WTC11 (cell line): ENCODE measurements at regions of chr11 and their contacts with region 1.

Region 1: DNA sequence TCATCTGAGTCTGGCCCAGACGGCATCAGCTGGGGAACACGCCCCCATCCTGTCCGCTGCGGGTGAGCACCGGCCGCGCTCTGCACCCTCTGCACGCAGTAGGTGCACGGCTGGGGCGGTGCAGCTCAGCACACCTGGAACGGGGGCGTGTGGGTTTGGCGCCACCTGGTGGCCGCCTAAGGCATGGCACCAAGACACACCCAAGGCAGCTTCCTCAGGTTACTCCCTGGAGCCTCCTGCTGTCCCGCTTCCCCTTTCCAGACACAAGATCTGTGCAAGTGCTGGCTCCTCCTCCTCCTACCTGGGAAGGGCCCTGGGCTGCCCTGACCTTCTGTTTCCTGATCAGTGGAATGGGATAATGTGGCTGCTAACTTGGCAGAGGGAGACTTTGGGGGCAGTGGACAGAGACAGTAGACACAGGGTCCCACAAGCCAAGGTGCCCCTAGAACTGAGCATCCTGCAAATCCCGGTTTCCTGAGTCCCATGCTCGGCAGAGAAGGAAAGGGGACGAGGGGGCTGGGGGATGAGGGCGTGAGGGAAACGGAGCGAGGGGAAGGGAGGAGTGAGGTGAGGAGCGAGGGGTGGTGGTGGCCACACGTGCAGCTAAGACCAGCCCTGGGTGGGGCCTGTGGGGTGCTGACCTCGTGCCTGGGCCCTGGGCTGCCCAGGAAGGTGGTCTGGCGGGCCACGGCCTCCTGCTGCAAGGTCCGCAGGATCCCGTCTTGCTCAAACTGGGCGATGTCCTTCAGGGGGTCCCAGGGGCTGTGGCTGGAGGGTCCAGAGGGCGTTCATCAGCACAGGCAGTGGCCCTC is 34.8 kb upstream of the CARS1 start:
- DNase-seq: peak; percentile 95
- ATAC-seq: peak; percentile 92
- H3K4me3 Mint-ChIP-seq: no peak overlapping the region
- H3K27ac Mint-ChIP-seq: peak overlapping the region; percentile 21; the same call in 1 of the 2 replicates
- H3K4me1 Mint-ChIP-seq: peaks cover 23% of the 10 kb centered on the region
- H3K27me3 Mint-ChIP-seq: peaks cover 7% of the 10 kb centered on the region
- CTCF ChIP-seq: peak; percentile 100

Region 2: DNA sequence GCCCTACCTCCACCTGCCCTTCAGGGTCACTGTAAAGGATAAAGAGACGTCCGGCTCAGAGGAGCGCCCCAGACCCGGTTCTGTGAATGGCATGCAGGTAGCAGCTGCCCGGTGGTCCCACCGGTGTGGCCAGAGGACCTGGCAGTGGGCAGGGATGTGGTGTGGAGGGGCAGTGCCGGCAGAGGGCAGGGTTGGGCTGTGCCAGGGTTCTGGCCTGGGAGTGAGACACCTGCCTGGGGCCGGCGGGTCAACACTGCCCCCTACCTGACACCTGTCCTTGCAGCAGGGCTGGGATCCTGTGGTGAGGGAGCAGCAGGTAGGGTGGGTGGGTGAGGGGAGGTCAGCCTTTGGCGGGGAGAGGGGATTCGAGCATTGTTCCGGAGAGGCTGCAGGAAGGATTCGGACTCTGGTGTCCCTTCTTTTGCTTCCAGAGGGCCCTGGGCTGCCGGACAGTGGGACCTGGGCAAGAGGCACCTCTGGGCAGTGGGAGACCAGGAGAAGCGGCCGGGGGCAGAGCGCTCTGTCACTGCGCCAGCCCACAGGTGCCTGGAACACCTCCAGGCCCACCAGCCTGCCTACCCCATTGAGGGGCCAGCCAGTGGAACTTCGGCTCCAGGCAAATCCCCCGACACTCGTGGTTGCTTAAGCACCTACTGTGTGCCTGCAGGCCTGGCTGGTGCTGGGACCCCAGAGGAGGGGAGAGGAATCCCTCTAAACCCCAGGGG is 161.1 kb before region 1 on chr11:
- CTCF ChIA-PET with region 1: interaction called, 11 read pairs
- POLR2A ChIA-PET with region 1: no interaction called
- DNase-seq: peak; percentile 95
- ATAC-seq: peak; percentile 86
- H3K4me3 Mint-ChIP-seq: peak overlapping the region; percentile 72
- H3K27ac Mint-ChIP-seq: no peak overlapping the region
- H3K4me1 Mint-ChIP-seq: peaks cover 7% of the 10 kb centered on the region
- H3K27me3 Mint-ChIP-seq: peaks cover 42% of the 10 kb centered on the region
- CTCF ChIP-seq: peak; percentile 76

Region 3: DNA sequence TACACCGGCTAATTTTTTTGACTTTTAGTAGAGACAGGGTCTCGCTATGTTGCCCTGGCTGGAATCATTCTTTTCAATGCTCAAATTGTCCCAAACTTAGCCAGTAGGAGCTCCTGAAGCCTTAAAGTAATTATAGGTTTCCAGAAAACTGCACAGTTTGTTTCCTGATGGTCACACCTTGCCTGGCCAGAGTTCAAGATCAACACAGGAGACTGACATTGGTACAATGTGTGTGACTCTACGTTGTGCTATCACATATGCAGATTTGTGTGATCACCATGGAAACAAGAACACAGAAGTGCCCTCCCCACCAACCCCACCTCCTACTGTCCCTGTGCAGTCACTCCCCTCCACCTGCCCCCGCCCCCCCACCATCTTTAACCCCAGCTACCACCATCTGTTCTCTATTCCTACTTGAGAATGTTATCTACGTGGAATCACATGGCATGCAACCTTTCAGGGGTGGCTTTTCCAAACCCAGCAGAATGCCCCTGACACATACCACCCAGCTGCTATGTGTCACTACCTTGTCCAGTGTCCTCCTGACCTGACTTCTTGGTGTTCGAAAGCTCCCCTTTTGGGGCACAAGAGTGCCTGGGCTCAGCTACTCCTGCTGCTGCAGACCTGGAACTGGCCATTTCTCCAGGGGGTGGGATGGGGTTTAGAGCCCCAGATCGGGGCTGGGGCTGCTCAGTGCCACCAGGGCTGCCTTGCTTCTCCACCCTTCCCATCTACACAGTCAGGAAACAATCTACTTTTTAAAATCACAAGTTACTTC is 93.7 kb before region 1 on chr11:
- CTCF ChIA-PET with region 1: interaction called, 11 read pairs
- POLR2A ChIA-PET with region 1: no interaction called
- DNase-seq: no peak
- ATAC-seq: no peak
- H3K4me3 Mint-ChIP-seq: no peak overlapping the region
- H3K27ac Mint-ChIP-seq: no peak overlapping the region
- H3K4me1 Mint-ChIP-seq: peaks cover 5% of the 10 kb centered on the region
- H3K27me3 Mint-ChIP-seq: no peaks in the 10 kb centered on the region
- CTCF ChIP-seq: no peak

Region 4: DNA sequence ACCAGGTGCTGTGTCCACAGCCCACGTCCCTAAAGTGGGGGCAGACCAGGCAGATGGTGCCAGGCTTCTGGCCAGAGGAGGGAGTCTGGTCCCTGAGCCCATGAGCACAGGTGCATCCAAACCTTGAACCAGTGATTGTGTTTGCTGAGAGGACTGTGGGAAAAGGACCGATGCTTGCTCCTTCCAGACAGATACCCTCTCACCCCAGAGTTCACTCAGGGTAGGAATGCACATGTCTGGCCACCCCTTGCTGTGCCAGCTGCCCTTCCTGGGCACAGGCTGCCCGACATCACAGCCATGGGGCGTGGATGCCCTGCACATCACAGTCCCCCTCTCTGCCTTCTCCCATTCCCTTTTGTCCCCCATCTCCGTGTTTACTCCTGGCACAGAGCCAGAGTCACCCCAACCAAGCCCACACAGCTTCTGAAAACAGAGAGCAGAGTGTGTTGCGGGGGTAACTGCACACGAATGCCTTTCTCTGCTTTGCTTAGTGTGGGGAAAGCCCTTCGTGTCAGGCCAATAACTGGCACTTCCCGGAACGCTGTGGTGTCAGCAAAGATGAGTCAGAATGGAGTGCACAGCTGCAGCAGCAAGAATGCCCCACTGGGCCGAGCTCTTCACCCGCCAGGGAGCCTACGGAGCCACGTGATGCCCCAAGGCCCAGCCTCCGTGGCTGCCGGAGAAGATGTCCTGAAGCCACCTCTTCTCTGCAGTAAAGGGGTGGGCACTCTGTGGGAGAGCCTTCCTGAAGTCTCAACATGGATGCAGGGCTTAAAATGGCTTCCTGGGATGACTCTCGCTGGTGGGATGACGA is 42.4 kb before region 1 on chr11:
- CTCF ChIA-PET with region 1: interaction called, 49 read pairs
- POLR2A ChIA-PET with region 1: no interaction called
- DNase-seq: no peak
- ATAC-seq: no peak
- H3K4me3 Mint-ChIP-seq: no peak overlapping the region
- H3K27ac Mint-ChIP-seq: peak overlapping the region; percentile 78
- H3K4me1 Mint-ChIP-seq: peaks cover 26% of the 10 kb centered on the region
- H3K27me3 Mint-ChIP-seq: no peaks in the 10 kb centered on the region; the same call in 1 of the 2 replicates
- CTCF ChIP-seq: no peak

Region 5: GRCh38 chr11:3074912-3075589 is 16.9 kb before region 1 on chr11:
- CTCF ChIA-PET with region 1: interaction called, 14 read pairs
- POLR2A ChIA-PET with region 1: no interaction called
- DNase-seq: no peak
- ATAC-seq: no peak
- H3K4me3 Mint-ChIP-seq: no peak overlapping the region
- H3K27ac Mint-ChIP-seq: no peak overlapping the region
- H3K4me1 Mint-ChIP-seq: 0 out of 2 replicates have a peak, but pooled peaks cover 4% of the 10 kb centered on the region
- H3K27me3 Mint-ChIP-seq: no peaks in the 10 kb centered on the region
- CTCF ChIP-seq: no peak

Region 6: DNA sequence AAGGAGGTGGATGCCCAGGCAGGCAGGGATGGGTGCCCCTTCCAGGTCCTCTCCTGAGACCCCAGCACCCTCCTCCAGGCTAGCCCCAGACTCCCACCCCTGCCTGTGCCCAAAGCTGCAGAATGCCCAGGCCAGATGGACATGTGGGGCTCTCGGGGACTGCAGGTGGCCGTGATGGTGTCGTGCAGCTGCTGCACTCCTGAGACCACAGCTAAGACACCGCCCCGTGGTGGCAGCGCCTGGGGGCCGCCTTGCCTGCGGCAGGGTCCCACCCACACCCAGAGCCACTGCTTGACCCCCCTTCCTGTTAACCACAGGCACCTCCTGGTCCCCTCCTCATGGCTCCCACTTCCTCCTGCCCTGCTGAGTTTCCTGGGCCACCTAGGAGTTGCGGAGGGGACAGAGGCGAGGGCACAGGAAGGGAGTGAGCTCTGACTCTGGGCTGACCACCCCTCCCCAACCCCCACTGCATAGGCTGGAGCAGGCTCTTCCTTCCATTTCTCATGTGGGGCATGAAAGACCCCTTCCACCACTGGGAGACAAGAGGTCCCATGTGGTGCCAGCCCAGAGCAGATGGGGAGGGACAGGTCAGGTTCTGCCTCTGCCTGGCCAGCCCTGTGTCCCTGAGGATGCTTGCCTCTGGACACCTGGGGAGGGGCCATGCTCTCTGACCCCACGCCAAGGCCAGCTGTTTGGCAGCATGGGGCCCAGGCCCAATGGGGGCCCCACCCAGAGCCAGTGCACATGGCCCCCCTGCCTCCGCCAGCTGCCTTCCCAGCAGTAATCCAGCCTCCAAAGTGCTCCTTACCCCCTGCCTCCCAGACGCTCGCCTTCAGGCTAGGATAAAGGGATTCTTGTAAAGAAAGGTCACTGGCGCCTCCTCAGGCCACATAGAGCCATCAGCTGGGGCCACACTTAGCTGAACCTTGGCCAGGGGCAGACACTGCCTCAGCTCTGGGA is 43.8 kb after region 1 on chr11:
- CTCF ChIA-PET with region 1: interaction called, 21 read pairs
- POLR2A ChIA-PET with region 1: no interaction called
- DNase-seq: peak; percentile 46
- ATAC-seq: peak; percentile 66
- H3K4me3 Mint-ChIP-seq: no peak overlapping the region
- H3K27ac Mint-ChIP-seq: no peak overlapping the region
- H3K4me1 Mint-ChIP-seq: 0 out of 2 replicates have a peak, but pooled peaks cover 3% of the 10 kb centered on the region
- H3K27me3 Mint-ChIP-seq: no peaks in the 10 kb centered on the region
- CTCF ChIP-seq: no peak

Region 7: DNA sequence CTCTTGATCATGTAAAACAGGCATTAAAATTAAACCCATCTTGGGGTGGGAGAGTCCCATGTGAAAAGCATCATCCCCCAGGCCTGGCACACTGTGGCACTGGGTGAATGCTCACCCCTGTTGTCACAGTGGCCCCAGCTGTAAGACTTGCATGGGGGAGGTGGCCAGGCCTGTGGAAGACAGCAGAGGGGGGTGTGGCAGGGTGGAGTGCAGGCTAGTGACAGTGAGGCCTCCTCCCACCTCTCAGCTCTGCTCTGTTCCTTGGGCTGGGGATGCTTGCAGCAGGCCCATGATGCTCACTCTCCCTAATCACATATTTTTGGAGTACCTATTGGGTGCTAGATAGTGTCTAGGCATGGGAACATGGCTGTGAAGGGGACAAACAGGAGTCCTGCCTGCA is 83.2 kb after region 1 on chr11:
- CTCF ChIA-PET with region 1: no interaction called
- POLR2A ChIA-PET with region 1: no interaction called
- DNase-seq: no peak
- ATAC-seq: no peak
- H3K4me3 Mint-ChIP-seq: no peak overlapping the region
- H3K27ac Mint-ChIP-seq: no peak overlapping the region
- H3K4me1 Mint-ChIP-seq: no peaks in the 10 kb centered on the region
- H3K27me3 Mint-ChIP-seq: peaks cover 16% of the 10 kb centered on the region
- CTCF ChIP-seq: no peak

Region 8: DNA sequence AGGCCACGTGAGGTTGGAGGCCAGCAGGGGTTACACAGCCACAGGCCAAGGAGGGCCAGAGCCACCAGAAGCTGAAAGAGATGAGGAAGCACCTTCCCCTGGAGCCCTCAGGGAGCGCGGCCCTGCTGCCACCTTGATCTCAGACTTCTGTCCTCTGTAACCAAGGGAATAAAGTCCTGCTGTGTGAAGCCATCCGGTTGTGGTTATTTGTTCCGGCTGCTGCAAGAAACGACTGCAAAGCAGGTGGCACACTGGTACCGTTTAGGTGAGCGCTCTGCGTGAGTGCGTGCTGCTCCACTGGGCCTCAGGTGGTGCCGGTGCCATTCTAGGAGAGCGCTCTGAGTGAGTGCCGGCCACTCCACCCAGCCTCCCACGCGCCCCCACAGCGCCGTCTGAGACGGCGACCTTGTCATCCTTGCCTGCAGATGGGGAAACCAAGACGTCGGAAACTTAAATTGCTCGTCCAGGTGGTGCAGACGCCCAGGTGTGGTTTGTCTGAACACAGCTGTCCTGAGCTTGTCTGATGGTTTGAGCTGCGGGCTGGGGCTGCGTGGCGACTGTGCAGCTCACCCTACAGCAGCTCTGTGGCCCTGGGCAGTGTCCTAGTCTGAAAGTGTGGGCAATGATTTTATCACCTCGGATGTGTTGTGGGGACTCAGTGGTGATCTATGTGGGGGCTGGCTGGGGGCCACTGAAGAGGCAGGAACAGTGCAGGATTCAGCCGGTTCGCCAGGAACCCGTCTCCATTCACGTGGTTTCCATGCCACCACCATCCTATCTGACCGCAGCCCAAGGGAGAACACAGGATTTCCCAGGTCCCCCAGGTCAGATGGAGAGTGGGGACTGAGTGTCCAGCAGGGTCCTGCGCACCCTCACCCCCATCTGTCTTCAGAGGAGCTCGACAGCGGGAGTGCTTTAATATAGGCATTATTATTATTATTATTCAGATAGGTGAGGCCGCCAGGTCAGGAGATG is 131.2 kb after region 1 on chr11:
- CTCF ChIA-PET with region 1: interaction called, 14 read pairs
- POLR2A ChIA-PET with region 1: no interaction called
- DNase-seq: no peak
- ATAC-seq: no peak
- H3K4me3 Mint-ChIP-seq: no peak overlapping the region
- H3K27ac Mint-ChIP-seq: no peak overlapping the region
- H3K4me1 Mint-ChIP-seq: peaks cover 32% of the 10 kb centered on the region
- H3K27me3 Mint-ChIP-seq: no peaks in the 10 kb centered on the region
- CTCF ChIP-seq: no peak

Region 9: DNA sequence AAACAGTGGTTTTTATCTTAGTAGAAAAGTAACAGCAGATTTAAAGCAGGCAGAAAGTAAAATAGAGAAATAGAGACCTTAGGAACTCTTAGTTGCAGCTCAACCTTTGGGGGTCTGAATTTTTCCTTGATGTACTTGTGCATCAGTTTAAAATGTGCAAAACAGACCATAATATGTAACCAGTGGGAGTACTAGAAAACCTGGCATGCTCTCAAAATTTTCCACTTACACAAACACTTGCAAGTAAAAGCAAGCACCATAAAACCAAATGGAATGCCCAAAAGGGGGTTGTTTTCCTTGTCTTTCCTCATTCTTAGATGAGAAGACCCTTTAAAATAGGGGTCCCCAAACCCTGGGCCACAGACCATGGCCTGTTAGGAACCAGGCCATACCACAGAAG is 153.1 kb after region 1 on chr11:
- CTCF ChIA-PET with region 1: no interaction called
- POLR2A ChIA-PET with region 1: no interaction called
- DNase-seq: no peak
- ATAC-seq: no peak
- H3K4me3 Mint-ChIP-seq: no peak overlapping the region
- H3K27ac Mint-ChIP-seq: no peak overlapping the region
- H3K4me1 Mint-ChIP-seq: peaks cover 17% of the 10 kb centered on the region
- H3K27me3 Mint-ChIP-seq: peaks cover 5% of the 10 kb centered on the region
- CTCF ChIP-seq: no peak